ENCODE measurements at regions of chr5 and their contacts with region 1.

Region 1: DNA sequence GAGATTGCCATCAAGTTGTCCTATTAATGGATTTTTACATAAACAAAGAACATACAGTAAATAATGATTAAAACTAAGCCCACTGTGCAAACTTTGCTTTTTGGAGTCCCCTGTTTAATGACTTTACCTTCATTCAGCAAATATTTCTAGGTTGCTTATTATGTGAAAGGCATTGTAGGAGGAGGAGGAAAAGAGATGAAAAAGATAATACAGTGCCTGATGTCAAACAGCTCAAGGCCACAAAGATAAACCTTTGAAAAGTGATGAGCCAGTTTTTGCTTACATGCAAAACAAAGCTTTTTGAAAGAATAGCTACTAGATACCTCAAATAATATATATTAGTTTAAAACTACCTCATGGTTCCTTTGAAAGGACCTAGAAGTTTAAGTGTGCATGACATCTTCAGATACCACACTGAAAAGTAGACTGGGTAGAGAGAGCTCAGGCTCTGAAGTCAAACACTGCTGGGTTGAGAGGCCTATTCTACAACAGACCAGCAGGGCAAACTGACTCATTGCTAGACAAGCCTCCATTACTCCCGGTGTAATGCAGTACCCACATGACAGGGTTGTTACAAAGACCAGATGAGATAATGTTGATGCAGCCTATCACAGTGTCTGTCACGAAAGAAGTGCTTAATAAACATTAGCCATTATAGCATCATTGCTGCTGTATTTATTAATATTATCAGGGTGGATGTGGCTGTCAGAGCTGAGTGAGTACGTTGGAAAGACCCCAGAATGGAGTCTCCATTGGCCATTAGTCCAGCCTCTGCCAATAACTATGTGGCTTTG is 11.8 kb downstream of the DEPDC1B start:
- DNase-seq: no peak
- ATAC-seq: peak; percentile 100
- H3K4me3 ChIP-seq: no peak overlapping the region
- H3K27ac ChIP-seq: no peak overlapping the region
- H3K4me1 ChIP-seq: no peaks in the 10 kb centered on the region
- H3K27me3 ChIP-seq: no peaks in the 10 kb centered on the region
- CTCF ChIP-seq: peak; percentile 62

Region 2: GRCh38 chr5:60463179-60463868 is 224.8 kb before region 1 on chr5:
- CTCF ChIA-PET with region 1: no interaction called
- POLR2A ChIA-PET with region 1: no interaction called
- in situ Hi-C with region 1: no loop called
- intact Hi-C with region 1: no loop called
- DNase-seq: no peak
- ATAC-seq: no peak
- H3K4me3 ChIP-seq: no peak overlapping the region
- H3K27ac ChIP-seq: no peak overlapping the region
- H3K4me1 ChIP-seq: no peaks in the 10 kb centered on the region
- H3K27me3 ChIP-seq: no peaks in the 10 kb centered on the region
- CTCF ChIP-seq: no peak

Region 3: DNA sequence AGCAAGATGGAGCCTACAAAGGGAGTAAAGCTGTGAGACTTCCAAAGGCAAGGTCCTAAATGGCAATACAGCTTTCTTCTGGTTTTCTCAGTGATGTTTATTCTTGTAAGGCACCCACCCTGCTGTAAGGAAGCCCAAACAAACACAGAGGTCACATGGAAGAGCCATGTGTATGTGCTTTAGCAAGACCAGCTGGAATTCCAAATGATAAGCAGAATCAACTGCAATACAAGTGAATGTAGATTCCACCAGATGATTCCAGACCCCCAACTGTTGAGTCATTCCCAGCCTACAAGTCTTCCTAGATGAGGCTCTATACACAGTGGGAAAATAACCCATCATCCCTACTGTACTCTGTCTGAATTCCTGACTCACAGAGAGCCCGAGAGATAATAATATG is 111.0 kb before region 1 on chr5:
- CTCF ChIA-PET with region 1: no interaction called
- POLR2A ChIA-PET with region 1: no interaction called
- in situ Hi-C with region 1: no loop called
- intact Hi-C with region 1: no loop called
- DNase-seq: no peak
- ATAC-seq: no peak
- H3K4me3 ChIP-seq: no peak overlapping the region
- H3K27ac ChIP-seq: no peak overlapping the region
- H3K4me1 ChIP-seq: no peaks in the 10 kb centered on the region
- H3K27me3 ChIP-seq: no peaks in the 10 kb centered on the region
- CTCF ChIP-seq: no peak

Region 4: GRCh38 chr5:60929024-60929423 is 240.9 kb after region 1 on chr5:
- CTCF ChIA-PET with region 1: no interaction called
- POLR2A ChIA-PET with region 1: no interaction called
- in situ Hi-C with region 1: no loop called
- intact Hi-C with region 1: loop called (anchors 10 kb)
- DNase-seq: no peak
- ATAC-seq: no peak
- H3K4me3 ChIP-seq: no peak overlapping the region
- H3K27ac ChIP-seq: no peak overlapping the region
- H3K4me1 ChIP-seq: no peaks in the 10 kb centered on the region
- H3K27me3 ChIP-seq: no peaks in the 10 kb centered on the region
- CTCF ChIP-seq: peak; percentile 55

Measured in Panc1 (cell line).